ENCODE measurements at regions of chr1 and their contacts with region 1.

Region 1: GRCh38 chr1:26321315-26322041 is 3.7 kb downstream of the CD52 start:
- DNase-seq: peak; percentile 81
- H3K4me3 ChIP-seq: no peak overlapping the region
- H3K27ac ChIP-seq: no peak overlapping the region
- H3K4me1 ChIP-seq: no peaks in the 10 kb centered on the region
- H3K27me3 ChIP-seq: no peaks in the 10 kb centered on the region
- CTCF ChIP-seq: peak; percentile 82 to 92
- POLR2A ChIP-seq: no peak

Region 2: DNA sequence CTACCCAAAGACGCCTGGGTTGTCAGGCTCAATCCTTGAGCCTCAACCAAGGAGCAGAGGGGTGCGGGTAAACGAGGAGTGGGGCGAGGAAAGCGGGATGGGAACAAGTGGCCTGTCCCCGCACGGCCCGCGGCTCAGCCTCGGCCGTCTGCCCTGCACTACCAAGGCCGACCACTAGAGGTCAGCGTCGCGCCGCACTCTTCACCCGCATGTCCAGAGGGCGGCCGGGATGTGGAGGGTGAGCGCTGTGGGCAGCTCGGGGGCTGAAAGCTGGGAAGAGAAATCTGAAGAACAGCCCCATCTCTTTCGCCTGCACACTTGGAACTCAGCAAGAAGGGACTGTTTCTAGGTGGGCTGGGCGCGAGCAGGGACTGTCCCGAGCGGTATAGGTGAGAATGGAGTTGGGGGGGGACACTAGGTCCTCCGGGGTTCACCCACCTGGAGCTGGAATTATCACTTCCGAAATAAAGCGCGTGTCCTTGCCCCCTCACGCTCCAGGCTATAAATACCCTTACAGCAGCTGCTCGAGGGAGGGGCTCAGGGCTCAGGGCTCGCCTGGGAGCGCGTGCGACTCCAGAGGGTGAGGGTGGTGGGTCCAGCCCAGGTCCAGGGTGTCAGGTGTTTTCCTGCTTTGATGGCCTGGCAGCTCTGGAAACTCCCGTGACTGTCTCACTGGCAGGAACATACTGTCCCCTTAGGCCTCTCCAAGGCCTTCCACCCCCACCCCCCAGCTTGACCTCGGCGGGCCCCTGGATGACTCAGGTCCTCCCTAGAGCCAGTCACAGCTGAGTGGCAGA is 285.3 kb before region 1 on chr1:
- CTCF ChIA-PET with region 1: interaction called, 13 read pairs
- POLR2A ChIA-PET with region 1: no interaction called
- dilution Hi-C with region 1: no loop called
- intact Hi-C with region 1: loop called (anchors 2 kb)
- DNase-seq: peak; percentile 74
- H3K4me3 ChIP-seq: peak overlapping the region; percentile 65 to 85 (median 81)
- H3K27ac ChIP-seq: no peak overlapping the region
- H3K4me1 ChIP-seq: peaks cover 15% of the 10 kb centered on the region
- H3K27me3 ChIP-seq: peaks cover 0 to 3% of the 10 kb centered on the region in 2 experiments
- CTCF ChIP-seq: peak; percentile 98 to 99
- POLR2A ChIP-seq: no peak

Region 3: GRCh38 chr1:26111530-26112406 is 209.7 kb before region 1 on chr1 and contains the start of gene PDIK1L:
- CTCF ChIA-PET with region 1: interaction called, 11 read pairs
- POLR2A ChIA-PET with region 1: no interaction called
- dilution Hi-C with region 1: no loop called
- intact Hi-C with region 1: no loop called
- DNase-seq: peak; percentile 96
- H3K4me3 ChIP-seq: peak within 1 kb of the TSS; percentile 63 to 99 (median 75)
- H3K27ac ChIP-seq: peak within 1 kb of the TSS; percentile 47
- H3K4me1 ChIP-seq: peaks cover 11% of the 10 kb centered on the region
- H3K27me3 ChIP-seq: no peaks in the 10 kb centered on the region
- CTCF ChIP-seq: no peak
- POLR2A ChIP-seq: peak; percentile 72
- total RNA-seq, gene PDIK1L: 5.6 and 8.0 TPM in 2 replicates

Region 4: DNA sequence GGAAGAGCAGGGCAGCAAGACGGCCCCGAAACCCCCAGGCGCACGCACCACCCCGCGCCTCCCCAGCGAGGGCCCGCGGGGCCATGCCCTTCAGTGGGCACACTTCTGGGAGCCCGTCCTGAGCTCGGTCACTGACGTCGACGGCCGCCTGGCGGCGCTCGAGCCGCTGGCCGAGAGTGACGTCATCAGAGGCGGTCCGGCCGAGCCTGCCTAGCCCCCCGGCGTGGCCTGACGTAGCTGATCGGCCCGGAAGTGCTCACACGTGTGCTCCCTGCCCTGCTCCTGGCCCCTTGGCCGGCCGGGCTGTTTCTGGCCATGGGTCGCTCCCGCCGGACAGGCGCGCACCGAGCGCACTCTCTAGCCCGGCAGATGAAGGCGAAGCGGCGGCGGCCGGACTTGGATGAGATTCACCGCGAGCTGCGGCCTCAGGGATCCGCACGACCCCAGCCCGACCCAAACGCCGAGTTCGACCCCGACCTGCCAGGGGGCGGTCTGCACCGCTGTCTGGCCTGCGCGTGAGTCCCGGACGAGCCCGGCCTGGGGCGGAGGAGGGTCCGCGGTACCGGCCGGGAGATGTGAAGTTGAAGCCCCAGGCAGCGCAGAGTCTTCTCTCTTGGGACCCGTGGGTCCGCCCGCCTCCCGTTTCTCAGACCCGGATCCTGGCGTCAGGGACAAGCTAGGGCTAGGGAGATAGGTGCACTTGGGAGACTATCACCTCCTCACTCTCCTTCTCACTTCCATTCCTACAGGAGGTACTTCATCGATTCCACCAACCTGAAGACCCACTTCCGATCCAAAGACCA is 151.6 kb before region 1 on chr1 and contains the start of gene ZNF593:
- CTCF ChIA-PET with region 1: interaction called, 48 read pairs
- POLR2A ChIA-PET with region 1: no interaction called
- dilution Hi-C with region 1: no loop called
- intact Hi-C with region 1: loop called (anchors 1 kb)
- DNase-seq: peak; percentile 88
- H3K4me3 ChIP-seq: peak within 1 kb of the TSS; percentile 46 to 72 (median 67)
- H3K27ac ChIP-seq: peak within 1 kb of the TSS; percentile 47
- H3K4me1 ChIP-seq: no peaks in the 10 kb centered on the region
- H3K27me3 ChIP-seq: no peaks in the 10 kb centered on the region
- CTCF ChIP-seq: peak; percentile 92 to 99
- POLR2A ChIP-seq: peak; percentile 88
- total RNA-seq, gene ZNF593: 30.5 and 41.0 TPM in 2 replicates

Region 5: GRCh38 chr1:26284597-26285360 is 36.7 kb before region 1 on chr1:
- CTCF ChIA-PET with region 1: interaction called, 132 read pairs
- POLR2A ChIA-PET with region 1: no interaction called
- dilution Hi-C with region 1: no loop called
- intact Hi-C with region 1: loop called (anchors 1 kb)
- DNase-seq: peak; percentile 83
- H3K4me3 ChIP-seq: no peak overlapping the region
- H3K27ac ChIP-seq: peak overlapping the region; percentile 19
- H3K4me1 ChIP-seq: peaks cover 26% of the 10 kb centered on the region
- H3K27me3 ChIP-seq: no peaks in the 10 kb centered on the region
- CTCF ChIP-seq: peak; percentile 55 to 93
- POLR2A ChIP-seq: peak; percentile 46

Region 6: DNA sequence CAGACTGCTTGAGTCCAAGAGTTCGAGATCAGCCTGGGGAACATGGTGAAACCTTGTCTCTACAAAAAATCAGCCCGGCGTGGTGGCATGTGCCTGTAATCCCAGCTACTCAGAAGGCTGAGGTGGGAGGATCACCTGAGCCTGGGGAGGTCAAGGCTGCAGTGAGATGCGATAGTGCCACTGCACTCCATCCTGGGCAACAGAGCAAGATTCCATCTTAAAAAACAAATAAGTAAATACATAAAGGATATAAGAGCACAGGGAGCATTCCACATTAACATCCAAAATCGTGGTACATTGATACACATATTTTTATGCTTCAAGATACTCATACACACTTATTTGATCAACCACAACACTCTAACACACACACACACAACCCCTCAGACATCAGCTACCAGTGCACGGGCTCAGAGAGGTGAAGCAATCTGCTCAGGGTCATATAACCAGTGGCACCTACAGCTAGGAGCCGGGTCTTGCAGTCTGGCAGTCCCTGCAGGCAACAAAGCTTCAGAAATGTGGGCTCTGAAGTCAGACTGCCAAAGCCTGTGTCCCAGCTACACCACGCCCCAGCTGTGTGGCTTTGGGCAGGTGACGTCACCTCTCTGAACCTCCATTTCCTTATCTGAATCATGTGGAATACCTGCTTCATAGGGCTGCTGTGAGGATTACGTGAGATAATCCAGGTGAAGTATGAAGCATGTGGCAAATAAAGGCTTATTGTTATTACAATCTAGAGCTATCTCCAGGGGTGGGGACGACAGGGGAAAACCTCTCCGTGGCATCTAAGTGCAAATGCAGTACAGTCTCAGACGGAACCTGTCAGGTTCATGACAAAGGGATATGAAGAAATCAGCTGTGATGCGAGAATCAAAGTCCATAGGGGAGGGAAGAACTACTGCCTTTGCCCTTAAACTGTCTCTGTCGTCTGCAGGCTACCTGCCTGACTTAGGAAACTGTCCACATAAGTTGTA is 37.2 kb after region 1 on chr1:
- CTCF ChIA-PET with region 1: interaction called, 25 read pairs
- POLR2A ChIA-PET with region 1: interaction called, 4 read pairs
- dilution Hi-C with region 1: no loop called
- intact Hi-C with region 1: loop called (anchors 5 kb)
- DNase-seq: no peak
- H3K4me3 ChIP-seq: no peak overlapping the region
- H3K27ac ChIP-seq: no peak overlapping the region
- H3K4me1 ChIP-seq: no peaks in the 10 kb centered on the region
- H3K27me3 ChIP-seq: peaks cover 23 to 25% of the 10 kb centered on the region in 2 experiments
- CTCF ChIP-seq: no peak
- POLR2A ChIP-seq: no peak

Region 7: GRCh38 chr1:27021354-27022031 is 700.0 kb after region 1 on chr1:
- CTCF ChIA-PET with region 1: no interaction called
- POLR2A ChIA-PET with region 1: no interaction called
- dilution Hi-C with region 1: no loop called
- intact Hi-C with region 1: no loop called
- DNase-seq: peak; percentile 76
- H3K4me3 ChIP-seq: no peak overlapping the region
- H3K27ac ChIP-seq: no peak overlapping the region
- H3K4me1 ChIP-seq: peaks cover 7% of the 10 kb centered on the region
- H3K27me3 ChIP-seq: no peaks in the 10 kb centered on the region
- CTCF ChIP-seq: no peak
- POLR2A ChIP-seq: no peak